Activated CD4-positive, alpha-beta T cell treated with anti-CD3 and anti-CD28 coated beads, Interleukin-2, amount 10 ng/mL, durations not matched to agents 24 days and 14 days (primary cell): ENCODE measurements at regions of chr7 and their contacts with region 1.

Region 1: DNA sequence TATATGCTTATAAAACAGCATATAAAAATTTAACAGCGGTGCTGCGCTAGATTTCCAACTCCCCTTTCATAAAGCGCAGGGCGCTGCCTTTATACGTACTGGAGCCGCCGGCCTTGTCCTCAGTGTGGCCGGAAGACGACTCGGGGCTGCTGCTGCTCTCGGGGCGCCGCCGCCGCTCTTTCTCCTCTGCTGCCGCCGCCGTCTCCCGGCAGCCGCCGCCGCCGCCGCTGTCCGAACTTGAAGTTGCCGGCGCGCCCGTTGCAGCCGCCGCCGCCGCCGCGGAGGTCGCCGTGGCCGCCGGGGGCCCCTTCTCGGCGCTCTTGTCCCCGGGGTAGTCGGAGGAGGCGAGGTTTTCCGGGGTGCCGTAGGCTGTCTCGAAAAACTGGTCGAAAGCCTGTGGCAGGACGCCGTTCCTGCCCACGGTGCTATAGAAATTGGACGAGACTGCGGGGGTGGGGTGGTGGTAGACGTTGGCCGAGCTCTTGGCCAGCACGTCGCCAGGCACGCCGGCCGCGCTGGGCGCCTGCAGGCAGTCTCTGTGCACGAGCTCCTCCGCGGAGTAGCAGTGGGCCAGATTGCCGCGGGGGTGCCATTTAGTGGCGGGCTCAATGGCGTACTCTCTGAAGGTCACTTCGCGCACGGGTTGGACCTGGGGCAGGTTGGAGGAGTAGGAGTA is 557 bp downstream of the HOXA11 start:
- DNase-seq: peak; percentile 69
- H3K4me3 Mint-ChIP-seq: peak overlapping the region; percentile 56
- H3K27ac Mint-ChIP-seq: peak overlapping the region; percentile 78
- H3K4me1 Mint-ChIP-seq: peaks cover 18% of the 10 kb centered on the region
- H3K27me3 Mint-ChIP-seq: peaks cover 78% of the 10 kb centered on the region

Region 2: GRCh38 chr7:27095897-27096767 is 88.3 kb before region 1 on chr7 and contains the start of gene HOXA1:
- intact Hi-C with region 1: no loop called
- DNase-seq: peak; percentile 88
- H3K4me3 Mint-ChIP-seq: peak within 1 kb of the TSS; percentile 85
- H3K27ac Mint-ChIP-seq: peak within 1 kb of the TSS; percentile 62
- H3K4me1 Mint-ChIP-seq: peaks cover 17% of the 10 kb centered on the region
- H3K27me3 Mint-ChIP-seq: peaks cover 90% of the 10 kb centered on the region
- total RNA-seq, gene HOXA1: 0.09 and 0.16 TPM in 2 replicates

Region 3: GRCh38 chr7:27172823-27173510 is 11.5 kb before region 1 on chr7:
- intact Hi-C with region 1: loop called (anchors 2 kb)
- DNase-seq: no peak
- H3K4me3 Mint-ChIP-seq: no peak overlapping the region
- H3K27ac Mint-ChIP-seq: no peak overlapping the region
- H3K4me1 Mint-ChIP-seq: peaks cover 5% of the 10 kb centered on the region
- H3K27me3 Mint-ChIP-seq: peaks cover 60% of the 10 kb centered on the region

Region 4: GRCh38 chr7:27235387-27236311 is 51.2 kb after region 1 on chr7:
- intact Hi-C with region 1: no loop called
- DNase-seq: no peak
- H3K4me3 Mint-ChIP-seq: no peak overlapping the region
- H3K27ac Mint-ChIP-seq: no peak overlapping the region
- H3K4me1 Mint-ChIP-seq: no peaks in the 10 kb centered on the region
- H3K27me3 Mint-ChIP-seq: peaks cover 63% of the 10 kb centered on the region